ENCODE measurements at regions of chr1 and their contacts with region 1.

Region 1: DNA sequence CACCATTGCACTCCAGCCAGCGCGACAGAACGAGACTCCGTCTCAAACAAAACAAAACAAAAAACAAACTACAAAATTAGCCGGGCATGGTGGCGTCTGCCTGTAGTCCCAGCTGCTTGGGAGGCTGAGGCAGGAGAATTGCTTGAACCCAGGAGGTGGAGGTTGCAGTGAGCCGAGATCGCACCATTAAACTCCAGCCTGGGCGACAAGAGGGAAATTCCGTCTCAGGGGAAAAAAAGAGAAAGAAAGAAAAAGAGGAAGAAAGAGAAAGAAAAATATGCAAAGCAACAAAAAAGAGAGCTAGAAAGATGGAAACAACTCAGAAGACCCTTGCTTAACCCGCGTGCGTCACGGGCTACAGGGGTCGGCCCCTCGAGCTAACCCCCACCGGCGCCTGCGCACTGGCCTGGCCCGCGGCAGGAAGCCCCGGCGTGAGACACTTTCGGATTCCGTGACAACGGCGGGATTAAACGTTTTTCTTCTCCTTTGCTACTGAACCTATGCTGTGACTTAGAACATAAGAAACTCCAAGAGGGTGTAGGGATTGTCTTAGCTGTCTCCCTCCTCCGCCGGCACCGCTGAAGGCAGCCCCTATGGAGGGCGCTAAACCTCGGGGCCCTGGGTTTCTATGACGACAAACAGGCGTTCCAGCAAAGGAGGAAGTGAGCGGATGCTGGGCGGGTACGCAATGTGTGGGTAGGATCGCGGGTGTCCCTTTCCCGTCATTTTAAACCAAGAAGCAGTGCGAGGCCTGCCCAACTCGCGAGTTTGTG is at the start of gene AXDND1:
- DNase-seq: peak; percentile 93 to 96 (median 94)
- H3K4me3 ChIP-seq: peak within 1 kb of the TSS; percentile 71 to 76
- H3K4me3 Mint-ChIP-seq: peak within 1 kb of the TSS; percentile 92 to 99 (median 98)
- H3K27ac ChIP-seq: peak within 1 kb of the TSS; percentile 99
- H3K27ac Mint-ChIP-seq: peak within 1 kb of the TSS; percentile 100
- H3K4me1 ChIP-seq: peaks cover 10% of the 10 kb centered on the region
- H3K4me1 Mint-ChIP-seq: peaks cover 5 to 22% (median 10%) of the 10 kb centered on the region in 4 donors
- H3K27me3 ChIP-seq: no peaks in the 10 kb centered on the region
- H3K27me3 Mint-ChIP-seq: no peaks in the 10 kb centered on the region
- total RNA-seq, gene AXDND1: 0.44 to 1.3 TPM

Region 2: DNA sequence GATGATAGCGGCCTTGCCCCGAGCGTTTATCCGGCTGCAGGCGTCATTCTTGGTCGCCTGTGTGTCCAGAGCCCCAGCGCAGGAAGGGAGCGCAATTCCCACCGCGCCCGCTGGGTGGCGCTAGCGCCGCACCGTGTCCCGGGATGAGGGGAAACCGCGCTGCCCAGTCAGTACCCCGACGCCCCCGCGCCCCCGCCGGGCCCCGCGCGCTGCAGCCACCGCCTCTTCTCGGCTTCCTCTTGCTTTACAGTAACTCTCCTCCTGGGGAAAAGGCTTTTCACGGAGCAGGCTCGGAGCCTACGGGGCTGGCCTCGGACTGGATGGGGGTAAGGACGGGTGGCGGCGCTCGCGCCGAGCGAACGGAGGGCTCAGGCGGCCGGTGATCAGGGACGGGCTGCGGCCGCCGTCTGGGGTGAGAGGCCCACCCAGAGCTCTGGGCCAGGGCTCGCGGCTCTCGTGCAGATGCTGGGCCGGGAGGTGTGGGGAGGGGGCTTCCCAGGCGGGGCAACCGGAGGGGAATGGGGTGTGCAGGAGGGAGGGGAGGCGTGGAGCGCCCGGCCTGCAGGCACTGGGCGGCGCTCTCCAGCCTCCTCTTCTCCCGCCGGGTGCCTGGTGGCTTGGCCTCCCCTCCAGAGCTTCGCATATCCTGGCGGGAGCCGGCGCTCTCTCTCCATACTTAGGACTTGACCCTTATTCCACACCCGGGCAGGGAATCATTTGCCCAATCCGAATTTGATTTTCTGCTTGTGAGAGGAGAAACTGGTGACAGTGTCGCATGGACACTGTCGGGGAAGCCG is 822.7 kb before region 1 on chr1:
- CTCF ChIA-PET with region 1: interaction called, 3 read pairs
- POLR2A ChIA-PET with region 1: no interaction called
- intact Hi-C with region 1: loop called (anchors 1 kb)
- DNase-seq: peak; percentile 73 to 88 (median 81)
- H3K4me3 ChIP-seq: peak overlapping the region; percentile 91 to 99
- H3K4me3 Mint-ChIP-seq: peak overlapping the region; percentile 92 to 95 (median 94)
- H3K27ac ChIP-seq: peak overlapping the region; percentile 39
- H3K27ac Mint-ChIP-seq: peak overlapping the region in 6 of 7 donors; percentile 65 to 90 (median 83)
- H3K4me1 ChIP-seq: peaks cover 16% of the 10 kb centered on the region
- H3K4me1 Mint-ChIP-seq: peaks cover 9 to 27% (median 11%) of the 10 kb centered on the region in 4 donors
- H3K27me3 ChIP-seq: no peaks in the 10 kb centered on the region
- H3K27me3 Mint-ChIP-seq: no peaks in the 10 kb centered on the region

Region 3: GRCh38 chr1:179002552-179003345 is 362.8 kb before region 1 on chr1:
- CTCF ChIA-PET with region 1: interaction called, 7 read pairs
- POLR2A ChIA-PET with region 1: no interaction called
- intact Hi-C with region 1: loop called (anchors 2 kb)
- DNase-seq: peak; percentile 39 to 59 (median 44)
- H3K4me3 ChIP-seq: no peak overlapping the region
- H3K4me3 Mint-ChIP-seq: peak overlapping the region in 6 of 8 donors; percentile 9 to 71 (median 24)
- H3K27ac ChIP-seq: no peak overlapping the region
- H3K27ac Mint-ChIP-seq: peak overlapping the region in 5 of 7 donors; percentile 15 to 86 (median 77)
- H3K4me1 ChIP-seq: peaks cover 19% of the 10 kb centered on the region
- H3K4me1 Mint-ChIP-seq: peaks cover 11 to 21% (median 16%) of the 10 kb centered on the region in 4 donors
- H3K27me3 ChIP-seq: no peaks in the 10 kb centered on the region
- H3K27me3 Mint-ChIP-seq: peaks cover 0 to 3% of the 10 kb centered on the region in 2 donors

Region 4: DNA sequence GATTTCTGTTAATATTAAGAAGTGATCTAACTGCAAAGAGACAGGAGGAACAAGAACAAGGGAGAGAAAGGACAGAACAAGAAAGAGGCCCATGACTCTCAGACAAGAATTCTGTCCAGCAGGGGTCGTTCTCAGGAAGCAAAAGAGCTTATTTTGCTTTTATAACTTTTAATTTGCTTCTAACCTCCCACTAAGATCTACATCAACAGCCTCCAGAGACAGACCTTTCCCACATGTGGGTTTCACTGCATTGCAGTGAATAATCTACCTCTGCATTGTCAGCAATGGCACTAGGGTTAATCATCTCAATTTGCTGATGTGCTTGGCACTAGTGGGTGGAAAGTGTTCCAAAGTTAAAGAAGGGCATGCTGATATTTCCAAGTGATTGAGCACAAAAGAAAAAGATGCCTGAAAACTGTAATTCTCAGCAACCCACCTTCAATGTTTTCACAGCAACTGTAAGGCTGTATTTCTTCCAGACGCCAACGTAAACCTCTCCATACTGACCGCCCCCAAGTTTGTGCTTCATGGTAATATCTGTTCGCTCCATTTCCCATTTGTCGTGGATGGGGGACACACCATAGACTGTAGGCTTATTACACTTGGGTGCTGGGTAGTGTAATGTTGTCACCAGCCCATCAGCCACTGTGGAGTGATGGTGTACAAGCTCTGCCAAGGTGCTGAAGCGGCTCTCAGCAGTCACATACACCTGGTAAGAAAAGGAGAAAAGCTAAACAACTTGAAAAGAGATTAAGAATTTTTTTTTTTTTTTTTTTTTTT is 244.2 kb before region 1 on chr1:
- CTCF ChIA-PET with region 1: interaction called, 114 read pairs
- POLR2A ChIA-PET with region 1: interaction called, 5 read pairs
- intact Hi-C with region 1: loop called (anchors 1 kb)
- DNase-seq: peak; percentile 38 to 47 (median 45)
- H3K4me3 ChIP-seq: no peak overlapping the region
- H3K4me3 Mint-ChIP-seq: peak overlapping the region in 1 of 8 donors; percentile 48
- H3K27ac ChIP-seq: no peak overlapping the region
- H3K27ac Mint-ChIP-seq: peak overlapping the region in 1 of 7 donors; percentile 30
- H3K4me1 ChIP-seq: no peaks in the 10 kb centered on the region
- H3K4me1 Mint-ChIP-seq: peaks cover 0 to 7% (median 0%) of the 10 kb centered on the region in 4 donors
- H3K27me3 ChIP-seq: no peaks in the 10 kb centered on the region
- H3K27me3 Mint-ChIP-seq: no peaks in the 10 kb centered on the region

Region 5: DNA sequence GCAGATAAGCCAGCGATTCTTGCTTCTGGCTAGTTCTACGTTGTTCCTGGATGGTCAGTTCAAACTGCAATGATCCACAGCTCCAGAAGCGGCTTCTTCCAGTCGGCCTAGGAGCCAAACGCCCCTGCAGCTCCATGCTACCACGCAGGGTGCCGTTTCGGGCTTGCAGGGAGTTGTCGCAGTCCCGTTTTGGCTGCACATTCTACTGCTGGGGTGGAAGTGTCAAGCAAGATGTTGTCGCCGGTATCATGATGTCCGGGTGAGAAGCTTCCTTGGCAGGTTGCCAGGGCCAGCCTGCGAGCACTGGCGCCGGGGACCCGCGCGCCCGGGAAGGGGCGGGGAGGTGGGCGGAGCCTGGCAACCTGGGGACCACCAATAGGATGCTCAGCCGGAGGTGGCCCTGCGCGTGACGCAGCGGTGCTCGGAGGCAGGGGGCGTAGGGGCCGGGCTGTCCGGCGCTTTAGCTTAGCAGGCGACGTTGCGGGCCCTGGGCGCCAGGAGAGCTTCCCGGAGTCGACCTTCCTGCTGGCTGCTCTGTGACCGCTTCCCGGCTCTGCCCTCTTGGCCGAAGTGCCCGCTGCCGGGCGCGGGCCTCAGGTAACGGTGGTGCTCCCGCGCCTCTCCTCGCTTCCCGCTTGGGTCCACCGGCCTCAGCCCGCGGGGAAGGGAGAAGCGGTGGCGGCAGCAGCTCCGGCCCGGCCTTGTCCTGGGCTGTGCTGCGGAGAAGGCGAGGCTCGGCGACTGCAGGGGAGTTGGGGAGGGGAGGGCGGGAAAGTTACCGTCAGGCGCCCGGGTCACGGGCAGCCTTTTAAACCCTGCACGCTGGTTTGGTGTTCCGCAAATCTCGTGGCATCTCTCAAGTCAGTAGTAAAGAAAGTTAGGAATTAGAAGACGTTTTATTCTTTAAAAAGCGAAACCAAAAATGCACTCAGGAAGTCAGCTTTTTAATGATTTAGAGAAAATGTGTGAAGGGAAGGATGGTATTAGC is 71.9 kb before region 1 on chr1 and contains the start of gene SOAT1:
- CTCF ChIA-PET with region 1: interaction called, 9 read pairs
- POLR2A ChIA-PET with region 1: interaction called, 64 read pairs
- intact Hi-C with region 1: loop called (anchors 1 kb)
- DNase-seq: peak; percentile 89 to 92 (median 90)
- H3K4me3 ChIP-seq: peak within 1 kb of the TSS; percentile 82 to 93
- H3K4me3 Mint-ChIP-seq: peak within 1 kb of the TSS; percentile 91 to 99 (median 96)
- H3K27ac ChIP-seq: peak within 1 kb of the TSS; percentile 86
- H3K27ac Mint-ChIP-seq: peak within 1 kb of the TSS; percentile 81 to 98 (median 95)
- H3K4me1 ChIP-seq: peaks cover 46% of the 10 kb centered on the region
- H3K4me1 Mint-ChIP-seq: peaks cover 25 to 47% (median 31%) of the 10 kb centered on the region in 4 donors
- H3K27me3 ChIP-seq: no peaks in the 10 kb centered on the region
- H3K27me3 Mint-ChIP-seq: no peaks in the 10 kb centered on the region
- total RNA-seq, gene SOAT1: 51.2 to 51.6 TPM

Region 6: DNA sequence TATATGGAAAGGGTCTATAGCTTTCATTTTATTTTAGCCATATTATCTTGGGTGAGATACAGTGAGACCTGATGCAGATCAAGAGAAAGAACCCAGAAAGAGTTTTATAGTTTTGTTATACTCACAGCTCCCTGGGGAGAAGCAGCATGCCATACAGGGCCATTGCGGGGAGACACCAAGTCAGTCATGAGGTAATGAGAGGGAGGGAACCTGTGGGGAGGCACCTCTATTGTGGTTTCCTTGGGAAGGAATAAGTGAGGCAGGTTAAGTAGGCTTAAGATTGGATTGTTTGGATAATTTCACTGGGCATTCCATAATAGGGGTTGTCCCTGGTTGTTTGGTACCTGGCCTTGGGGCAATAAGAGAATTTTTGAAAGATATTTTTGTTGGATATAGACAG is 20.0 kb after region 1 on chr1:
- CTCF ChIA-PET with region 1: no interaction called
- POLR2A ChIA-PET with region 1: no interaction called
- intact Hi-C with region 1: no loop called
- DNase-seq: no peak
- H3K4me3 ChIP-seq: no peak overlapping the region
- H3K4me3 Mint-ChIP-seq: no peak overlapping the region
- H3K27ac ChIP-seq: no peak overlapping the region
- H3K27ac Mint-ChIP-seq: no peak overlapping the region
- H3K4me1 ChIP-seq: no peaks in the 10 kb centered on the region
- H3K4me1 Mint-ChIP-seq: no peaks in the 10 kb centered on the region
- H3K27me3 ChIP-seq: no peaks in the 10 kb centered on the region
- H3K27me3 Mint-ChIP-seq: peaks cover 0 to 1% of the 10 kb centered on the region in 2 donors

Measured in CD4-positive, alpha-beta memory T cell (primary cell).